ENCODE measurements at regions of chr12 and their contacts with region 1.

Region 1: GRCh38 chr12:14384783-14385638 is 19.5 kb downstream of the ATF7IP start:
- DNase-seq: peak; percentile 89 to 90
- H3K4me3 ChIP-seq: peak overlapping the region; percentile 12
- H3K4me3 Mint-ChIP-seq: peak overlapping the region; percentile 75
- H3K27ac Mint-ChIP-seq: peak overlapping the region; percentile 84
- H3K4me1 ChIP-seq: peaks cover 19% of the 10 kb centered on the region
- H3K4me1 Mint-ChIP-seq: peaks cover 20% of the 10 kb centered on the region
- H3K27me3 ChIP-seq: no peaks in the 10 kb centered on the region
- H3K27me3 Mint-ChIP-seq: no peaks in the 10 kb centered on the region
- CTCF ChIP-seq: no peak

Region 2: DNA sequence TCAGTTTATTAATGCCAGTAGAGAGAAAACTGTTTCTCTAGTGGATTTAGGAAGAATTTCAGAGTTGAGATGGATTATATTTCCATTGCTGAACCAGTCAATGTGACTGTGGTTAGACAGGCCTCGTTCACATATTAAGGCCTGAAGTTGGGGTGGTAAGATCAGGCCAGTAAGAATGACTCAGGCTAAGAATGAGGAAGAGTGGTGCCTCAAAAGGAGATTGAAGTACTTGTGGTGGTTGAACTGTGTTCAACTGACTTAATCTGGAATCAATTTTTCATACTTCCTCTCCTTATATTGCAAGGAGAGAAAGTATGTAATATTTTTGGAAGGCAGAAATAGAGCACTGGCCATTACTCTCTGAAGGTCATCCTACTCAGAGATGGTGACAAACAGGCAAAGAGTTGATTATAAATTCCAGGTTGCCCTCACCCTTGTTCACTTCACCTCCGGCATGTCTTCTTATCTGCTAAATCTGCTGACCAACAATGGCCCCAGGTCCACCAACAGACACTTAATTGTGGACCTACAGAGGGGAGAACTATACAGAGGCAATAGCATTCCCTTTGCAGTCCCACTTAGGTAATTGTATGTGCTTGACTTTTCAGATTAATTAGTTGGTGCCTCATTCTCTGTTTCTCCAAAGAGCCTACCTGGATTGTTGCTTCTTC is 57.2 kb before region 1 on chr12:
- CTCF ChIA-PET with region 1: no interaction called
- POLR2A ChIA-PET with region 1: no interaction called
- intact Hi-C with region 1: no loop called
- DNase-seq: no peak
- H3K4me3 ChIP-seq: no peak overlapping the region
- H3K4me3 Mint-ChIP-seq: no peak overlapping the region
- H3K27ac Mint-ChIP-seq: no peak overlapping the region
- H3K4me1 ChIP-seq: no peaks in the 10 kb centered on the region; the same call in 1 of the 2 replicates
- H3K4me1 Mint-ChIP-seq: no peaks in the 10 kb centered on the region
- H3K27me3 ChIP-seq: no peaks in the 10 kb centered on the region
- H3K27me3 Mint-ChIP-seq: no peaks in the 10 kb centered on the region
- CTCF ChIP-seq: no peak

Region 3: GRCh38 chr12:14417715-14418114 is 32.7 kb after region 1 on chr12:
- CTCF ChIA-PET with region 1: no interaction called
- POLR2A ChIA-PET with region 1: no interaction called
- intact Hi-C with region 1: loop called (anchors 2 kb)
- DNase-seq: peak; percentile 76 to 85
- H3K4me3 ChIP-seq: no peak overlapping the region
- H3K4me3 Mint-ChIP-seq: peak overlapping the region; percentile 14
- H3K27ac Mint-ChIP-seq: no peak overlapping the region
- H3K4me1 ChIP-seq: peaks cover 15% of the 10 kb centered on the region; the same call in 1 of the 2 replicates
- H3K4me1 Mint-ChIP-seq: peaks cover 13% of the 10 kb centered on the region
- H3K27me3 ChIP-seq: no peaks in the 10 kb centered on the region
- H3K27me3 Mint-ChIP-seq: no peaks in the 10 kb centered on the region
- CTCF ChIP-seq: no peak

Measured in Caco-2 (cell line).